MCF 10A (cell line): ENCODE measurements at regions of chr6 and their contacts with region 1.

Region 1: DNA sequence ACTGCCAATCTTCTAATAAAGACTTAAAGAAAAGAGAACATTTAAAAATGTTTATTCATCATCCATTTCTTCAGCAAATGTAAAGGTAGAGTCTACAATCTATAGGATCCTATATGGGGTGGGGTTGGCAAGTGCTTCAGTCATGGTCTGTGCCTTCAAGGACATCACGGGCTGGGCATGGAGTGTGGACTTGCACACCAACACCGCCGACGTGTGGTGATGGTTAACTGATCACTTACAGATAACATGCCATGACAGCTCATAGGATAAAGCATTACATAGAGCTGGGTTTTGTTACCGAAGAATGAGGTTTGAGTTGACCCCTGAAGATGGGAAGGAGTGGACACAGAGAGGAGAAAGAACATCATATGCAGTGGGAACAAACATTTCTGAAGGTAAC is 595.8 kb downstream of the PRKN start:
- DNase-seq: peak; percentile 3
- H3K4me3 Mint-ChIP-seq: no peak overlapping the region
- H3K27ac Mint-ChIP-seq: no peak overlapping the region
- H3K4me1 Mint-ChIP-seq: no peaks in the 10 kb centered on the region
- H3K27me3 Mint-ChIP-seq: no peaks in the 10 kb centered on the region
- CTCF ChIP-seq: no peak

Region 2: GRCh38 chr6:161748535-161749416 is 383.0 kb before region 1 on chr6:
- CTCF ChIA-PET with region 1: no interaction called
- POLR2A ChIA-PET with region 1: no interaction called
- intact Hi-C with region 1: loop called (anchors 5 kb)
- DNase-seq: peak; percentile 67
- H3K4me3 Mint-ChIP-seq: no peak overlapping the region
- H3K27ac Mint-ChIP-seq: no peak overlapping the region
- H3K4me1 Mint-ChIP-seq: peaks cover 4% of the 10 kb centered on the region
- H3K27me3 Mint-ChIP-seq: no peaks in the 10 kb centered on the region
- CTCF ChIP-seq: peak; percentile 52

Region 3: DNA sequence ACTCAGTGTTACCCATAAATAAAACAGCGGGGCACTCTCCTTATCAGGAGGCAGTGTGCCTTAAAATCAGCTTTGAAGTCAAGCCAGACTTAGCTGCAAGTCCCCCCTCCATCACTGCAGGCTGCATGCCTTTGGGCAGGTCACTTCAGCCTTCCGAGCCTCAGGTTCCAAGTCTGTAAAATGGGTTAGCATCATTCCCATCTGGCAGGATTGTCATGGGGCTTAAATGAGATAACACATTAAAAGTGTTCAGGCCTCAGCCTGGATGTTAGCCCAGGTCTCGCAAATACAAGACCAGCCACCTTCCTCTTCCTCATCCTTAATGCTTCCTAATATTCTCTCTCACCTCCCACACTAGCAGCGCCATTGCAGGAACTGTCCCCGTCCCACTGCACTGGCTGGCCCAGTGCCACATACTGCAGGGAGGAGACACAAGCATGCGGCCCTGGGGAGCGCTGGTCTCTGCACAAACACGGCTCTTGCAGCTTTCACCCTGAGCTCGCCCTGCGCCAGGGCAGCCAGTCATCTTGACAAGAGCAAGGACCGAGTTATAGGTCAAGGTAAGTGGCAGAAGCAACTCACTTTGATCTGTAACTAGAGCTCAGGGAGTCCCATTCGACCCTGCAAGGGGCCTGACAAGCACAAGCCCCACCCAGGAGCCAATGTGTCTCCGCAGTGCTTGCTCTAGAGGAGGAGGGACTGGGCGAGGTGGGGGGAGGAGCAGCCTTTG is 293.3 kb before region 1 on chr6:
- CTCF ChIA-PET with region 1: no interaction called
- POLR2A ChIA-PET with region 1: no interaction called
- intact Hi-C with region 1: loop called (anchors 2 kb)
- DNase-seq: no peak
- H3K4me3 Mint-ChIP-seq: no peak overlapping the region
- H3K27ac Mint-ChIP-seq: no peak overlapping the region
- H3K4me1 Mint-ChIP-seq: no peaks in the 10 kb centered on the region
- H3K27me3 Mint-ChIP-seq: no peaks in the 10 kb centered on the region
- CTCF ChIP-seq: no peak

Region 4: DNA sequence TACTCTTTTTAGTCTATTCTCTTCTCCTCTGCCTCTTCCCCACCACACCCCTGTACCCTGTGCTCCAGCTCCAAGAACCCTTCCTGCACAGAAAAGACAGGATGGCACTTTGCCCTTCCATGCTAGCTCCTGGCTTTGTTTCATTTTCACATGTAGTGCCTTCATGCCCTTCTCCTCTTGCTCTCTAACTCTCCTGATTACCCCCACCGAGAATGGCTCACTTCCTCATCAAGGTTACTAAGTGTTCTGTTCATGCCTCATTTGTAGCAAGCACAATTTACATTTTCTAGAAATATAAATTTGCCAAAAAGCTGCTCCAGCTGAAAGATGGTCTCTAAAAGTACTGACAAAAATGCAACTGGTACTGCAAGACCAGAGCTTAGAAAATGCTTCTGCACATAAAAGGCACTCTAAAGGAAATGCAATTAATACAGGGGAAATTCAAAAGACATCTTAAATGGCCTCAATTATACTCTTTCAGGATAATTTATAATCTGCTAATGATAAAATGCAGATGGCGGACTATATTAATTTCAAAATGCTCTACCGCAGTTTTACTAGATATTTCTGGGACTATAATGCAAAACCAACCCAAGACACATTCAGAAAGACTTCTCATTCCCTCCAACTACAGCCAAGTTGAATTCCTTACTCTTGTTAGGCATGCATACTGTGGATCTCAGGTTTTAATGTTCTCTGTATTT is 25.6 kb after region 1 on chr6:
- CTCF ChIA-PET with region 1: no interaction called
- POLR2A ChIA-PET with region 1: no interaction called
- intact Hi-C with region 1: no loop called
- DNase-seq: no peak
- H3K4me3 Mint-ChIP-seq: no peak overlapping the region
- H3K27ac Mint-ChIP-seq: no peak overlapping the region
- H3K4me1 Mint-ChIP-seq: peaks cover 7% of the 10 kb centered on the region
- H3K27me3 Mint-ChIP-seq: no peaks in the 10 kb centered on the region
- CTCF ChIP-seq: no peak